Activated T-helper 2 cell treated with anti-CD3 and anti-CD28 coated beads, Interferon-gamma antibody, Interleukin-2, Interleukin-4, amounts not matched to agents 10 μg/mL and 5 μg/mL and 100 μg/mL, durations not matched to agents 14 hours and 24 hours and 36 hours (primary cell): ENCODE measurements at regions of chr4 and their contacts with region 1.

Region 1: GRCh38 chr4:186191200-186192065 is at the start of gene CYP4V2:
- DNase-seq: peak; percentile 90
- H3K4me3 Mint-ChIP-seq: peak within 1 kb of the TSS; percentile 93
- H3K27ac Mint-ChIP-seq: peak within 1 kb of the TSS; percentile 91
- H3K4me1 Mint-ChIP-seq: peaks cover 21% of the 10 kb centered on the region
- H3K27me3 Mint-ChIP-seq: peaks cover 1% of the 10 kb centered on the region
- total RNA-seq, gene CYP4V2: 8.5 and 8.9 TPM in 2 replicates

Region 2: DNA sequence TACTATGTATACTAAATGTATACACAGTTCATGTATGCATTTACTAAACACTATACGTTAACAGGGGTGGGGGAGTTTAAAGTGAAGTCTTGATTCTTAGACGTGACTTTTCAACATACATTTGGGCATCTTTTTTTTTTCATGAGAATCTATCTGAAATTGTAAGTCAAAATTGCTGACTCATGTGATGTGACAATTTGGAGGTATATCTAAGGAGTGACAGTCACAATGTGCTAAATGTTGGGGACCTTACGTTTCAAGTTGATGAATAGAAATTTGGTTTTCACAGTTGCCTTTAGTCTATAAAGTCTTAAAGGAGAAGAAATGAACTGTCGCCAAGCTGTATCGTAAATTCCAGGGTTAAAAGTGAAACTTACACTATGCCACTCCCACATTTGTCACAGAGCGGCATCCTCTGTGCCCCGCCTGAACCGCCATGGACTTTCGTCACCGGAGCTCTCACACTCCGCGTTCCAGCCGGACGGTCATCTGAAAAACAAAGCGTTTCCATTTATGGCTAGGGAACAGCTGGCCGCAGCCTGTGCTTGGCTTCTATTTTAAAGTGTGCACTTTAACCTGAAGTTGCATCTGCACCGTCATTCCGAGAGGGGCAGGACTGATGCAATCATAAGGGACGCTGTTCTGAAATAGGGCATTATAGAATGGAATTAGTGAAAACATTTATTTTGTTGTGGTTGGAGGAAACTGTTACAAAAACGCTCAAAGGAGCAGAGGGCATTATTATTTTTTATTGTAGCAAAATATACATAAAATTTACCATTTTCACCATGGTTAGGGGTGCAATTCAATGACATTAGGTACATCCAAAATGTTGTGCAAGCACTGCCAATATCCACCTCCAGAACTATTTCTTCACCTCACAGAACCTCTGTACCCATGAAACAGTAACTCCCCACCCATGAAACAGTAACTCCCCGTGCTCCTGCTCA is 687.1 kb before region 1 on chr4:
- intact Hi-C with region 1: no loop called
- DNase-seq: no peak
- H3K4me3 Mint-ChIP-seq: no peak overlapping the region
- H3K27ac Mint-ChIP-seq: no peak overlapping the region
- H3K4me1 Mint-ChIP-seq: no peaks in the 10 kb centered on the region
- H3K27me3 Mint-ChIP-seq: peaks cover 13% of the 10 kb centered on the region

Region 3: GRCh38 chr4:186144142-186144955 is 47.1 kb before region 1 on chr4:
- intact Hi-C with region 1: loop called (anchors 2 kb)
- DNase-seq: no peak
- H3K4me3 Mint-ChIP-seq: peak overlapping the region; percentile 72
- H3K27ac Mint-ChIP-seq: no peak overlapping the region
- H3K4me1 Mint-ChIP-seq: no peaks in the 10 kb centered on the region
- H3K27me3 Mint-ChIP-seq: peaks cover 46% of the 10 kb centered on the region